GM10248 (cell line): ENCODE measurements at regions of chr17 and their contacts with region 1.

Region 1: DNA sequence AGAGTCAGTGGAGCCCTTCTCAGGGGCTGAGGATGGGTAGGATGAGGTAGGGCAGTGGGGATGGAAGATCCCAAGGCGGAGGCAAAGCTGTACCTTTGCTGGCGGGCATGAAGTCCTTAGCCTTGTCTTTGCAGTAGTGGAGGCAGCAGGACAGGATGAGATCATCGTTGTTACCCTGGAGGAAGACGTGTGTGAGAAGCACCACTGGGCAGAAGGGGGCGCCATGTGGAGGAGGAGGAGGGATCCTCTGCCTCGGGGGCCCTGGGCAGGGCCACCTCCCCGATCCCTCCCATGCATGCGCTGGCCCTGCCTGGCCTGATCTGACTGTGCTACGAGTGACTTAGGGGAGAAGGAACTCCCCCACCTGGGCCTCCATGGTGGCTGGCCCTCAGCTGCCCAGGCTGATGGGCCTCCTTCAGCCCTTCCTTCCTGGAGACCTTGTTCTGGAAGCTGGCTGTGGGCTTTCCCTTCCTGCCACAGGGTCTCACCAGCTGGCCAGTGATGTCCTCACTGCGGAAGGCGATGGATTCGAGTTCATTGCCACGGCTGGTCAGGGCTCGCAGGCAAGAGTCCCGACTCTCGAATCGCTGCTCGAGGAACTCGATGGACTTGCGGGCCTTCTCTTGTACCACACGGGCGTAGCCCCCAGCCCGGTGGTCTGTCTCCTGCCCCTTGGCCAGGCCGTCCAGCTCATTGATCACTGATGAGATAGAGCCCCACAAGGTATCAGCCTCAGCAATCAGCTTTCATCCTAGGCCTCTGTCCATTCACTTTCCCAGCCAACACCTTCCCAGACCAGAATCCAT is 10.3 kb downstream of the HIC1 start:
- DNase-seq: peak; percentile 78
- CTCF ChIP-seq: peak; percentile 70

Region 2: DNA sequence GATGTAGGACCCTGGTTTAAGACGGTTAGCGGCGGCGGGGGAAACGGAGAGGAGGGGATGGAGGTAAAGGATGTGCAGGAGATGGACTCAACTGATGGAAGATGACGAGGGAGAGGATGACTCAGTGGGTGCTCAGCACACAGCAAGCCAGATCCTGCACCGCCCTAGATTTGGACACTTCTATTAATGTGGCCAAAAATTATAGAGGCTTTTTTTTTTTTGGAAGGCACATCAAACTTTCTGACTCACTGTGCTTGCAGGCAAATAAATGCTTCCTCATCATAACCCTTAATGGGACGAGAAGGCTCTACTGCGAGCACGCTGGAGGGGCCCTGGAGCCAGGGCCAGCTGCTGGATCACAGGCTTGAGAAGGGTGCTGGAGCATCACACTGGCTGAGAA is 76.0 kb before region 1 on chr17:
- CTCF ChIA-PET with region 1: no interaction called
- POLR2A ChIA-PET with region 1: no interaction called
- DNase-seq: no peak
- CTCF ChIP-seq: no peak

Region 3: DNA sequence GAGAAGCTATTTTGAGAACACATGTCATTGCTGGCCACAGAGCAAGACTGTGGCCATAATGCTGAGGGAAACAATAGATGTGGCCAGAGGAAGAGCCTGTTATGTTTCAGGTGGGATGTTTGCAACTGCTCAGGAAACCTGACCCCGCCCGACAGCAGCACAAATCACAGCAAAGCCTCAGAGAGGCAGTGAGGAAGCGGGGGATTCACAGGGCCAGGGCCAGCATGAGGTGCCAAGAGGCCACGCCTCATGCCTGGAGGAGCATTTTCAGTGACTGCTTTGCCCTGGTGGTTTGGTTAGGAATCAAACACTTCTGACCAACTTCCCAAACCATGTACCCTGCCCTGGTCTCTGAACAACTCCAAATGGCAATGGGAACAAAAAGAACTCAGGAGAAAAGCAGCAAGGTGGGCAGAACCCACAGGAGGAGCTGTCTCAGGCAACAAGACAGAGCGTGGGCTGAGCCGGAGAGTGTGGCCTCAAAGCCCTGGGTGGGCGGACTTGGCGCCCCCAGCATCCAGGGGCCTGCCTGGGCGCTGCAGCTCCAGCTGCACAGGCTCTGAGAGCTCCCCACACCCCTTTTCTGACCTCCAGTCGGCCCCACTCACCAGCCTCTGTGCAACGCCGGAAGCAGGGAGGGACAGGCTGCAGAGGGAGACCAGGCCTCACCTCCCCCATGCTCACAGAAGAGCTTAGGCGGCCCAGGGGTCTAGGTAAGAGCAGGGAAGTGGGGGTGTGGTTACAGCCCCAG is 10.3 kb after region 1 on chr17:
- CTCF ChIA-PET with region 1: interaction called, 188 read pairs
- POLR2A ChIA-PET with region 1: interaction called, 5 read pairs
- DNase-seq: peak; percentile 37
- CTCF ChIP-seq: no peak

Region 4: GRCh38 chr17:2087597-2088211 is 22.5 kb after region 1 on chr17:
- CTCF ChIA-PET with region 1: interaction called, 188 read pairs
- POLR2A ChIA-PET with region 1: interaction called, 8 read pairs
- DNase-seq: peak; percentile 68
- CTCF ChIP-seq: no peak

Region 5: DNA sequence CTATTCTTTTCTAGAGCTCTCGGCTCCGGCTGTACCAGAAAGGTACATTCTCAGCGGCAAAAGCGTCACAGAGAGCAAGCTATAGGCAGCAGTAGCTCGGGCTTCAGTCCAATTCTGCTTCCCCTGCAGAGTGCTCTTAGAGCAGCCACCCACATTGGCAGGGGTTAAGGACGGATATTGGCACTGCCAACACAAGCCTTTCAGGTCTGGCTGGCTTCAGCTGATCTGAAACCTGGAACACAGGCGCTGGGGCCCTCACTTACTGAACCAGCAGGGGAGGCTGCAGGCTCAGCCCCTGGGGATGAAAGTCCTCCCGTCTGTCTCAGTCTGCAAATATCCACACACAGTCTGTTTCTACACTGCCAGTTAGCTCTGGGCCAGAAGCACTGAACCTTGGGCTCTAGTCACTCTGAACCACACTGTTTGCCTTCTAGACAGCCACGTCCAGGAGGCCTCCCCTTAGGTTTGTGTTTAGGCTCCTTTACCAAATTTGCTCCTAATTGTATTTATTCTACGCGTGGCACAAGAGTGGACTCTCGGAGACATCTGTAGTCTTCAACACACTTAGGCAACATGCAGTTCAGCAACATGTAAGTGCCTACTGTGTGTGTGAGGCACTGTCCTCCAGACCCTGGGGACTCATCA is 29.8 kb after region 1 on chr17:
- CTCF ChIA-PET with region 1: interaction called, 188 read pairs
- POLR2A ChIA-PET with region 1: interaction called, 3 read pairs
- DNase-seq: peak; percentile 43
- CTCF ChIP-seq: peak; percentile 55